ENCODE measurements at regions of chr11 and their contacts with region 1.

Region 1: GRCh38 chr11:67239783-67240575 is 26.3 kb upstream of the GRK2 start:
- DNase-seq: peak; percentile 87
- ATAC-seq: peak; percentile 96
- H3K4me3 Mint-ChIP-seq: peak overlapping the region; percentile 92
- H3K27ac Mint-ChIP-seq: peak overlapping the region; percentile 94
- H3K4me1 Mint-ChIP-seq: peaks cover 38% of the 10 kb centered on the region
- H3K27me3 Mint-ChIP-seq: no peaks in the 10 kb centered on the region

Region 2: GRCh38 chr11:67195971-67196456 is 44.0 kb before region 1 on chr11:
- POLR2A ChIA-PET with region 1: no interaction called
- DNase-seq: no peak
- ATAC-seq: no peak
- H3K4me3 Mint-ChIP-seq: no peak overlapping the region
- H3K27ac Mint-ChIP-seq: peak overlapping the region; percentile 45
- H3K4me1 Mint-ChIP-seq: peaks cover 6% of the 10 kb centered on the region
- H3K27me3 Mint-ChIP-seq: no peaks in the 10 kb centered on the region

Region 3: GRCh38 chr11:67252831-67253239 is 12.9 kb after region 1 on chr11:
- POLR2A ChIA-PET with region 1: interaction called, 38 read pairs
- DNase-seq: peak; percentile 49
- ATAC-seq: peak; percentile 89
- H3K4me3 Mint-ChIP-seq: peak overlapping the region; percentile 39
- H3K27ac Mint-ChIP-seq: peak overlapping the region; percentile 71
- H3K4me1 Mint-ChIP-seq: peaks cover 37% of the 10 kb centered on the region
- H3K27me3 Mint-ChIP-seq: no peaks in the 10 kb centered on the region

Measured in activated naive CD8-positive, alpha-beta T cell treated with anti-CD3 and anti-CD28 coated beads, Interleukin-2, amount 10 ng/mL, durations not matched to agents 7 days and 5 days (primary cell).